ENCODE measurements at regions of chr5 and their contacts with region 1.

Region 1: GRCh38 chr5:164504141-164504772 is 998.8 kb downstream of the MAT2B start:
- DNase-seq: no peak
- ATAC-seq: no peak

Region 2: GRCh38 chr5:164013077-164013670 is 491.1 kb before region 1 on chr5:
- intact Hi-C with region 1: loop called (anchors 10 kb)
- DNase-seq: no peak
- ATAC-seq: peak; percentile 73